ENCODE measurements at regions of chr5 and their contacts with region 1.

Region 1: DNA sequence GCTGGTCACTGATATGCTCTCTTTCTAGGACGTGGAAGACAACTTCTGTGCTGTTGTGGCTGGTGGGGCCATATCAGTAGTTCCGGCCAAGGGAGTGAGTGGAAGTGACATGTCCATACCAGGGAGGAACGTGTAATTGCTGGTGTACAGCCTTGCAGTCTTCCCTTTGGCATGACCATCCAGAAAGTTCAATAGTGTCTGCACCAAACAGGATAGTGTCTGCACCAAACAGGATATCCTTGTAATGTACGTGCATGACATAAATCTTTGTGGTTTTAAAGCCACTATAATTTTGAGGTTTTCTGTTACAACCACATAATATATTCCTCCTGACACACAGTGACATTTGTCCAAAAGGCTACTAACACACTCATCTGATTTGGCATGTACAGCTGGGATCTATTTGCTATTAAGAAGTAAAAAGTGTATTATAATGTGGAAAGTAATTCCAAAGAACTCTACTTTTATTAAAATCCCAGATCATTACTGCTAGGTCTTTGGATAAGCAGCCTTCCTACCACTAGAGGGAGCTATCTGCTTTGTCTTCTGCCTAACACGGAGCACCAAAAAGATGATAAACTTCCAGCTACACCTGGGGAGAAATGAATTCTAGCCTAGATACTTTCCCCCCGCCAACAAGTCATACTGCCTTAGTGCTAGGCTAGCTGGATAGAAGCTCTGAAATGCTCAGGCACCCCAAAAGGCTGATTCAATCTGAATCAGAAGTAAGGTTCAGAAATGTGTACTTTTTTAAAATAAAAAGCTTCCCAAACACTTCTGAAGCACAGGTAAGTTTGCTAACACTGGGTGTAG is 52.7 kb downstream of the RNF145 start:
- DNase-seq: peak in 4 of 5 donors; percentile 5 to 69 (median 59)
- H3K4me3 ChIP-seq: no peak overlapping the region
- H3K4me3 Mint-ChIP-seq: peak overlapping the region in 1 of 7 donors; percentile 13
- H3K27ac ChIP-seq: no peak overlapping the region
- H3K27ac Mint-ChIP-seq: peak overlapping the region; percentile 13 to 89 (median 84)
- H3K4me1 ChIP-seq: peaks cover 7% of the 10 kb centered on the region
- H3K4me1 Mint-ChIP-seq: peaks cover 12 to 23% (median 15%) of the 10 kb centered on the region in 3 donors
- H3K27me3 ChIP-seq: no peaks in the 10 kb centered on the region
- H3K27me3 Mint-ChIP-seq: no peaks in the 10 kb centered on the region

Region 2: DNA sequence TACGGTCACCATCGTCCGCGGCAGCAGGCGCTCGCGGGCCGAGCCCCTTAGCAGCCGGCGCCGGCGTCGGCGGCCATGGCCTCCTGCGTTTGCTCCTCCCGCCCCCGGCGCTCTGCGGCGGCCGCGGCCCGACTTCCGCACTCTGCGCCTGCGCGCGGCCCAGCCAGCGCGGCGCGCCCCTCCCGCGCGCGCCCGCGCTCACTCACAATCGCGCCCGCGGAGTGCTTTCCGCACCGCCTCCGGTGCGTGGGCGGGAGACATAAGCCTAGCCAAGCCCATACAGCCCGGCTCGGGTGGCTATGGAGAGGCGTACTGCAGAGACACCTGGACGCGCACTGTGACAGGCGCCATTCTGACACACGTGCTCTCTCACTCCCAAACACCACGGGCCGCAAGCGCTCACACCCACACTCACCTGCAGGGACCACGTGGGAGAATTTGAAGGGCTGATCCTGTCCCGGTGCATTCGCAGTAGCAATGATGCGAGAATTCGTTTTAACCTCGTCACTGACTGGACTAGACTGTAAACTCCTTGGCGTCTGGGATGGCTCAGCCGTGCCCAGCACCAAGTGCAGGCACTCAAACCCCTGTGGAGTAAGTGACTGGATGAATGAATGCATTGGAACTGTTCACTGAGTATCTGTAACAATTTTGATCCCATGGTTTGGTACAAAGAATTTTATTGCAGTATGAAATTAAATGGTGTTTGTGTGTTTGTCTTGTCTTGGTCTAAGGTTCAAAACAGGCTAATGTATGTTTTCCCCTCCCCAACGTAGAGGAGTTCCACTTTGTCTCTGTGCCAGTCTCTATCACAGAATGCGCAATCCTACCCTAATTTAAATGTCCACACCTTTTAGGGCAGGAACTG is 53.0 kb after region 1 on chr5 and contains the start of gene RNF145:
- CTCF ChIA-PET with region 1: interaction called, 14 read pairs
- POLR2A ChIA-PET with region 1: interaction called, 7 read pairs
- DNase-seq: peak; percentile 86 to 95 (median 92)
- H3K4me3 ChIP-seq: peak within 1 kb of the TSS; percentile 88
- H3K4me3 Mint-ChIP-seq: peak within 1 kb of the TSS; percentile 96 to 99 (median 96)
- H3K27ac ChIP-seq: peak within 1 kb of the TSS; percentile 87
- H3K27ac Mint-ChIP-seq: peak within 1 kb of the TSS; percentile 96 to 98 (median 98)
- H3K4me1 ChIP-seq: peaks cover 40% of the 10 kb centered on the region
- H3K4me1 Mint-ChIP-seq: peaks cover 42 to 50% (median 49%) of the 10 kb centered on the region in 3 donors
- H3K27me3 ChIP-seq: no peaks in the 10 kb centered on the region
- H3K27me3 Mint-ChIP-seq: peaks cover 6 to 9% of the 10 kb centered on the region in 2 donors
- total RNA-seq, gene RNF145: 80.0 to 85.0 TPM

Region 3: DNA sequence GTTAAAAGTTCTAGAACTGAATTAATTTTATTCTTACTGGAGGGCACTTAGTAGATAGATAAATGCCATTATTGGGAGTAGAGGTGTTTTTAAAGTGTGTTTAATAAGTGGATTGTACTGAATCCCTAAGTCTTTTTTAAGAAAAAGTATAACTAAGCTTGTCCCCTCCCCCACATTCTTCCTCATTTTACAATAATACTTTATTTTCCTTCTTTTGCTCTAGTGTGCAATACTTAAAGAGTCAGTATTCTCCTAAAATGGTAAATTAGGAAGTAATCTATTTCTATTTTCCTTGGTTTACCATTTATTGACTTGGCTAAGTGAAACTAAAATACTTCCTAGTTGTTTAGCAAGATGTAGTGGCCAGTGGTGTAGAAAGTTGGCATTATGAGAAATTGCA is 118.0 kb after region 1 on chr5:
- CTCF ChIA-PET with region 1: interaction called, 7 read pairs
- POLR2A ChIA-PET with region 1: interaction called, 16 read pairs
- DNase-seq: no peak
- H3K4me3 ChIP-seq: no peak overlapping the region
- H3K4me3 Mint-ChIP-seq: peak overlapping the region in 1 of 7 donors; percentile 11
- H3K27ac ChIP-seq: no peak overlapping the region
- H3K27ac Mint-ChIP-seq: peak overlapping the region in 1 of 8 donors; percentile 26
- H3K4me1 ChIP-seq: no peaks in the 10 kb centered on the region
- H3K4me1 Mint-ChIP-seq: peaks cover 15 to 34% (median 34%) of the 10 kb centered on the region in 3 donors
- H3K27me3 ChIP-seq: no peaks in the 10 kb centered on the region
- H3K27me3 Mint-ChIP-seq: no peaks in the 10 kb centered on the region

Region 4: DNA sequence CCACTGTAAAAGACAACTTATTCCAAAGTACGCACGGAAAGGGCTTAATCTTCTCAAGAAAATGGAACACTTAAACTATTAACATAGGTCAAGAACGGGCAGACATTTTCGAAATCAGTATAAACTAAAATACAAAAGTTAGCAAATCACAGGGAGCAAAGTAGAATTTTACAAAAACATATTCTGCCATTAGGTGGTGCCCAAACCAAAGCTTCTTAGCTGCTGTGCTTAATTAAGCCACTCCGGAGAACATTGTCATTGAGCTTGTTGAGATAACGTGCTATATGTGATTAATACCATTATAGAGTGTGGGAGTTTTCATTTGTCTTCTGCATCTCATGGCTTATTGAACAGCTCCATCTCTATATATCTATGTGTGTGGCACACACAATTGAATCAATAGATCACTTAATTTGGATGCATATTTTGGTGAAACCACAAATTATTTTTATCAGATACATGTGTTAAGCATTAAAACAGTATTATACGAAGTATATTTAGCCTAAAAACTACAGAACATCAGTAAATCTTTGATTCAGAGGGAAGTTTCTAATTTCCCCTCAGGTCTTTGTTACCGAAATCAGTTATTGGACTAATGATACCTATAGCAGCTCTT is 129.9 kb after region 1 on chr5:
- CTCF ChIA-PET with region 1: interaction called, 11 read pairs
- POLR2A ChIA-PET with region 1: no interaction called
- DNase-seq: peak in 1 of 5 donors; percentile 28
- H3K4me3 ChIP-seq: no peak overlapping the region
- H3K4me3 Mint-ChIP-seq: no peak overlapping the region
- H3K27ac ChIP-seq: no peak overlapping the region
- H3K27ac Mint-ChIP-seq: no peak overlapping the region
- H3K4me1 ChIP-seq: no peaks in the 10 kb centered on the region
- H3K4me1 Mint-ChIP-seq: no peaks in the 10 kb centered on the region
- H3K27me3 ChIP-seq: no peaks in the 10 kb centered on the region
- H3K27me3 Mint-ChIP-seq: no peaks in the 10 kb centered on the region

Region 5: DNA sequence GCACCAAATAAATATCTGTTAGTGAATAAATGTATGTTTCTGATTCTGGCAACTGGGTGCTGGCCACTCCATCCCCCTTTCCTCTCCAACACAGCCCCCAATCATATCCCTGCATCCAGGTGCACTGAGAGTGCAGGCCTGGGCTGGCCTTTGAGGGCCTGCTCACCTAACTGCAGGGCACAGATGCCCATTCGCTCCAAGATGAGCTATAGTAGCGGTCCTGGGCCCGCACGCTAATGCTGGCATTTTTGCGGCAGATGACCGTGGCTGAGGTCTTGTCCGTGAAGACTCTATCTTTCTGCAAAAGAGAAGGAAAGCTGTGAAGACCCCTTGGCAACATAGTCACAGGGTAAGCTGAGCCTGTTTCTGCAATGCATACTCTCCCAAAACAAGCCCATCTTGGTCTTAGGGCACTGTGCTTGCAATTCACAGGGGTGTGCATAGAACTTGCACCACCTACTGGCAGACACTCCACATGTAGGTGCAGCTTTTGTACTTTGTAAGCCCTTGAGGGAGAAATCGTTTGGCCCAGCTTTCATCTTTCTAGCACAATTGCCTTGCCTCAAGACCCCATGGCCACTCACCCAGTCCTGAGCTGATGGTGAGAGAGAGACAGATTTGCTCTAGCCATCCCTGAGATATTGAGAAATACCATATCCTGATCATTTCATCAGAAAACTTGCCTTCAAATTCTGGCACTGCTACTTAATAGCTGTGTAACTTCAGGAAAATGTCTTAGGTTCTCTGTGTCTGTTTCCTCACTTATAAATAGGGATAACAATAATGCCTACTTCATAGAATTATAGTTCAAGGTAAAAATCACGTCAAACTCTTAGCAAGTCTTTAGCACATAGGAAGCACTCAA is 160.1 kb after region 1 on chr5:
- CTCF ChIA-PET with region 1: interaction called, 72 read pairs
- POLR2A ChIA-PET with region 1: no interaction called
- DNase-seq: peak in 3 of 5 donors; percentile 14 to 47 (median 17)
- H3K4me3 ChIP-seq: no peak overlapping the region
- H3K4me3 Mint-ChIP-seq: no peak overlapping the region
- H3K27ac ChIP-seq: no peak overlapping the region
- H3K27ac Mint-ChIP-seq: peak overlapping the region in 1 of 8 donors; percentile 84
- H3K4me1 ChIP-seq: no peaks in the 10 kb centered on the region
- H3K4me1 Mint-ChIP-seq: no peaks in the 10 kb centered on the region
- H3K27me3 ChIP-seq: peaks cover 4% of the 10 kb centered on the region
- H3K27me3 Mint-ChIP-seq: peaks cover 0 to 13% of the 10 kb centered on the region in 2 donors

Region 6: GRCh38 chr5:159456722-159457465 is 300.3 kb after region 1 on chr5:
- CTCF ChIA-PET with region 1: no interaction called
- POLR2A ChIA-PET with region 1: no interaction called
- DNase-seq: no peak
- H3K4me3 ChIP-seq: no peak overlapping the region
- H3K4me3 Mint-ChIP-seq: no peak overlapping the region
- H3K27ac ChIP-seq: no peak overlapping the region
- H3K27ac Mint-ChIP-seq: no peak overlapping the region
- H3K4me1 ChIP-seq: no peaks in the 10 kb centered on the region
- H3K4me1 Mint-ChIP-seq: peaks cover 14 to 37% (median 25%) of the 10 kb centered on the region in 3 donors
- H3K27me3 ChIP-seq: no peaks in the 10 kb centered on the region
- H3K27me3 Mint-ChIP-seq: peaks cover 8 to 20% of the 10 kb centered on the region in 2 donors